Breast epithelium (tissue), 4 donors: ENCODE measurements at regions of chr9 and their contacts with region 1.

Region 1: GRCh38 chr9:84254972-84255371 is 85.6 kb downstream of the SLC28A3 start:
- DNase-seq: peak; percentile 60 to 72
- H3K4me3 ChIP-seq: no peak overlapping the region
- H3K27ac ChIP-seq: peak overlapping the region; percentile 14 to 50
- H3K4me1 ChIP-seq: no peaks in the 10 kb centered on the region
- H3K27me3 ChIP-seq: no peaks in the 10 kb centered on the region
- CTCF ChIP-seq: no peak
- POLR2A ChIP-seq: no peak

Region 2: DNA sequence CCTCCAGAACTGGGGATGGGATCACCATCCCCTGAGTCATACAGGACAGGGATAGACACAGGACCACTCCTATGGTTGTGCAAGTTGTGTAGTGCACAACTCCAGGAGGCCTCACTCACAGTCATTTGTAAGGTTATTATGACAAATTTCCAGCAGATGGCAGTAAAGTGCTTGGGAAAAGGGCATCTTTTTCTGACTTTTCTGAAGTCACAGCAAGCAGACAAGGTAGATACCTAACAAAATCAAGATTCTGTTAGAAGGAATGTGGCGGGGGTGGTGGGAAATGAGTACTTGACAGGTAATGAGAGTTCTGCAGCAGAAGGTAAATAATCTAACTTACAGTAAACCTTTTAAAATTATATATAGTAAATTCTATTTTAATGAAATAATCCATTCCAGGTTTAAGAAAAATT is 317.1 kb before region 1 on chr9:
- intact Hi-C with region 1: loop called (anchors 5 kb)
- DNase-seq: no peak
- H3K4me3 ChIP-seq: no peak overlapping the region
- H3K27ac ChIP-seq: no peak overlapping the region
- H3K4me1 ChIP-seq: no peaks in the 10 kb centered on the region
- H3K27me3 ChIP-seq: no peaks in the 10 kb centered on the region
- CTCF ChIP-seq: peak in 2 of 3 donors; percentile 62 to 66
- POLR2A ChIP-seq: no peak